CD4-positive, alpha-beta T cell (primary cell): ENCODE measurements at regions of chr1 and their contacts with region 1.

Region 1: DNA sequence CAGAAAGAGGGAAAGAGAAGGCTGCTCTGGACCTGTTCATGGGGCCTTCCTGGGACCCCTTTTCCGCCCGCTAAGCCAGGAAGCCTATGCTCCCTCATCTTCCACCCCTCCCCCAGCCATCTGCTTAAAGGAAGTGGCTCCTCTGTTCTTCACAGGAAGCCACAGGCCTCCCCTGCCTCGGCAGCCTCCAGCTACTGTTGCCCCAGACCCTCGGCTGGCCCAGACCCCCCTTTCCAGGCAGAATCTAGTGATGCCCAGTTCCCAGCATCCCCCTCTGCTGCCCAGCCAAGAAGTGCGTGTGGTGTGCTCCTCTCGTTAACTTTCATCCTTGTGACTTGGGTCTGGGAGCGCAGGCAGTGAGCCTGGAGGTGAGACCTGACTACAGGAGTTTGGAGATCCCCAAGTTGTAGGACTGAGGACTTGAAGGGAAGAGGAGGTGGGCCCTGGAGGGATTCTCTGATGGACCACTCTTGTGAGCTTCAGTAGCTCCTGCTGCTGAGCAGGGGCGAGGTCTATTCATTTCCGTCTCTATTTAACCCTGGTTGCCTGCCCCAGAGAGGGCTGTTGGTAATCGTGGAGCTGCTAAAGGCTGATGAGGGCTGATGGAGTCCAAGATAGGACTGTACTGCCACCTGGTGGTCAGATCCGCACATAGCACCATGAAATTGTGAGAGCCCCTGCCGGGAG is 9.1 kb downstream of the IFI6 start:
- DNase-seq: peak; percentile 81 to 95 (median 90)
- ATAC-seq: peak; percentile 75
- H3K4me3 ChIP-seq: peak overlapping the region; percentile 44
- H3K4me3 Mint-ChIP-seq: peak overlapping the region; percentile 68
- H3K27ac ChIP-seq: peak overlapping the region; percentile 91 to 92
- H3K27ac Mint-ChIP-seq: peak overlapping the region; percentile 88
- H3K4me1 ChIP-seq: peaks cover 49% of the 10 kb centered on the region
- H3K4me1 Mint-ChIP-seq: peaks cover 48% of the 10 kb centered on the region
- H3K27me3 ChIP-seq: no peaks in the 10 kb centered on the region
- H3K27me3 Mint-ChIP-seq: no peaks in the 10 kb centered on the region
- CTCF ChIP-seq: peak; percentile 80

Region 2: DNA sequence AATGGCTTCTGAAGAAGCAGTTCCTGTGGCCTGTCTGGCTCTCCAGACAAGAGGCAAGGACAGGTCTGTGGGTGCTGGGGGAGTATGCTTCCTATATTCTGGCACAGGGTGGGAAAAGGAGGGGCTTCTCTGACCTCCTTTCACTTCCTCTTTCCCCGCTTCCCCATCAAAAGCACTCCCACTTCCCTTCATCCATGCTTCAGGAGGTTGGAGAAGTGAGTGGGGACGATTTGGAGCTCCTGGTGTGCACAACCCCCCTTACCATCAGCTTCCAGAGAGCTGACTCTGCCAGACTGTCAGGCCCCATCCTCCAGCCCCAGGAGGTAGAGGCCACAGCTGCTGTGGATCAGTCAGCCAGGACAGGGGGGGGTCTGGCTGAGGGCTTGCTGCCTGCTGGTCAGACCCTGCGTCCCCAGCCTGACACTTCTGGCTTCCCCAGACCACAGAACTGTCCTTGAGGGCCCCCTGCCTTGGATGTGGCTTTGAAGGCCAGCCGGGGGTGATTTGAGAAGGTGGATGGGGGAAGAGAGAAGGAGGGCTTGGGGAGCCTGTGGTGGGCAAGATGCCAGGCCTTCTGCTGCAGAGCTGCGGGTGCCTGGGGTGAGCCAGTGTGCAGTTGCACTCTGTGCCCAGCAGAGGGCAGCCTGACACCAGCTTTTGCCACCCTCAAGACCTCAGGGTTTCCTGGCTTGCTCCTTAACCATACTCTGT is 362.4 kb before region 1 on chr1:
- CTCF ChIA-PET with region 1: interaction called, 4 read pairs
- POLR2A ChIA-PET with region 1: no interaction called
- intact Hi-C with region 1: loop called (anchors 5 kb)
- DNase-seq: peak; percentile 61 to 91 (median 74)
- ATAC-seq: peak; percentile 96
- H3K4me3 ChIP-seq: no peak overlapping the region
- H3K4me3 Mint-ChIP-seq: no peak overlapping the region
- H3K27ac ChIP-seq: no peak overlapping the region
- H3K27ac Mint-ChIP-seq: no peak overlapping the region
- H3K4me1 ChIP-seq: peaks cover 8% of the 10 kb centered on the region
- H3K4me1 Mint-ChIP-seq: peaks cover 5% of the 10 kb centered on the region
- H3K27me3 ChIP-seq: no peaks in the 10 kb centered on the region
- H3K27me3 Mint-ChIP-seq: no peaks in the 10 kb centered on the region
- CTCF ChIP-seq: peak; percentile 96

Region 3: GRCh38 chr1:27416387-27417111 is 246.3 kb before region 1 on chr1:
- CTCF ChIA-PET with region 1: interaction called, 5 read pairs
- POLR2A ChIA-PET with region 1: interaction called, 4 read pairs
- intact Hi-C with region 1: loop called (anchors 5 kb)
- DNase-seq: peak in 10 of 14 experiments; percentile 28 to 81 (median 49)
- ATAC-seq: peak; percentile 73
- H3K4me3 ChIP-seq: no peak overlapping the region
- H3K4me3 Mint-ChIP-seq: no peak overlapping the region
- H3K27ac ChIP-seq: no peak overlapping the region
- H3K27ac Mint-ChIP-seq: peak overlapping the region; percentile 54
- H3K4me1 ChIP-seq: peaks cover 18% of the 10 kb centered on the region
- H3K4me1 Mint-ChIP-seq: peaks cover 46% of the 10 kb centered on the region
- H3K27me3 ChIP-seq: no peaks in the 10 kb centered on the region
- H3K27me3 Mint-ChIP-seq: no peaks in the 10 kb centered on the region
- CTCF ChIP-seq: peak; percentile 60

Region 4: GRCh38 chr1:27473755-27474154 is 189.1 kb before region 1 on chr1:
- CTCF ChIA-PET with region 1: no interaction called
- POLR2A ChIA-PET with region 1: no interaction called
- intact Hi-C with region 1: no loop called
- DNase-seq: peak in 2 of 14 experiments; percentile 3 to 18
- ATAC-seq: peak; percentile 32
- H3K4me3 ChIP-seq: no peak overlapping the region
- H3K4me3 Mint-ChIP-seq: peak overlapping the region; percentile 16
- H3K27ac ChIP-seq: no peak overlapping the region
- H3K27ac Mint-ChIP-seq: peak overlapping the region; percentile 57
- H3K4me1 ChIP-seq: peaks cover 59% of the 10 kb centered on the region
- H3K4me1 Mint-ChIP-seq: peaks cover 73% of the 10 kb centered on the region
- H3K27me3 ChIP-seq: no peaks in the 10 kb centered on the region
- H3K27me3 Mint-ChIP-seq: no peaks in the 10 kb centered on the region
- CTCF ChIP-seq: no peak

Region 5: DNA sequence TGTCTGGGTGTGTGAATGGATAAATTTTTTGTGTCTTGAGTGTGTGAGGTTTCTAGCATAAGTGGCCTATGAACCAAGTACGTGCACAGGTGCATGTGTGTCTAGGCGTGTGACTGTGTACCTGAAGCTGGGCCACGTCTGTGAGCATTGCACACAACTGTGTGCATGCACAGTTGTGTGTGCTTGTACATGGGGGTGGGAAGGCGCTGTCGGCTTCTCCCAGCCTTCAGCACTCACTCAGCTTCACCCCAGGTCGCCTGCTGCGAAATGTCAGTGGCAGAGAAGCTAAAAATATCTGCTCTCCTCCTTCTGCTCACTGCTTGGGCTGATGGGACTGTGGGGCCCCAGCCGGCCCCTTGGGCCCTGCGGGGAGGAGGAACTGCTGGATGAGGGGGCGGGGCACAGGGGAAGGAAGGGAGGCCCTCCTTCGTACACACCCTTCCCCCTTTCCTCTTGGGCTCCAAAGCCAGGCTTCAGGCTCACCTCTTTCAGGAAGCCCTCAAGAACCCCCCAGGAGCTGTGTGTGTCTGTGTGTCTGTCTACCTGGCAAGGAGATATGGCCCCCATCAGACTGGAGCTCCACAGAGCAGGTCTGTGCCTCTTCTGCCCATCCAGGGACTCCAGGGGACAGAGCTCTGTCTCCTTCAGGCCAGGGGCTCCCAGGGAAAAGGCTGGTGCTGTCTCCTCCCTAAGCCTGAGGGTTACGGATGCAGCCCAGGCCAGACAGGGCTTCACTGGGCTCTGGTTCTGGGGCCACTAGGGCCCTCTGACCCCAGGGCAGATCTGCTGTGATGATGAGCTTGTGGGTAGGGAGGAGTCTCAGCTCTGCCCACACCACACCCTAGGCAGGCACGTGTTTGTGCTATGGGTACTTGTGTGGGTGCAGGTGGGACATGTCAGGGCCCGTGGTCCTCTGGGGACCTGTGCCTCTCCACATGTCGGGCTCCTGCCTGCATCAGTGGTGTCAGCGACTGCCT is 137.3 kb before region 1 on chr1:
- CTCF ChIA-PET with region 1: interaction called, 3 read pairs
- POLR2A ChIA-PET with region 1: interaction called, 9 read pairs
- intact Hi-C with region 1: loop called (anchors 5 to 10 kb)
- DNase-seq: peak in 12 of 14 experiments; percentile 18 to 73 (median 53)
- ATAC-seq: peak; percentile 7
- H3K4me3 ChIP-seq: peak overlapping the region; percentile 45
- H3K4me3 Mint-ChIP-seq: peak overlapping the region; percentile 68
- H3K27ac ChIP-seq: peak overlapping the region; percentile 30 to 75
- H3K27ac Mint-ChIP-seq: peak overlapping the region; percentile 96
- H3K4me1 ChIP-seq: peaks cover 82% of the 10 kb centered on the region
- H3K4me1 Mint-ChIP-seq: peaks cover 85% of the 10 kb centered on the region
- H3K27me3 ChIP-seq: no peaks in the 10 kb centered on the region
- H3K27me3 Mint-ChIP-seq: no peaks in the 10 kb centered on the region
- CTCF ChIP-seq: no peak

Region 6: DNA sequence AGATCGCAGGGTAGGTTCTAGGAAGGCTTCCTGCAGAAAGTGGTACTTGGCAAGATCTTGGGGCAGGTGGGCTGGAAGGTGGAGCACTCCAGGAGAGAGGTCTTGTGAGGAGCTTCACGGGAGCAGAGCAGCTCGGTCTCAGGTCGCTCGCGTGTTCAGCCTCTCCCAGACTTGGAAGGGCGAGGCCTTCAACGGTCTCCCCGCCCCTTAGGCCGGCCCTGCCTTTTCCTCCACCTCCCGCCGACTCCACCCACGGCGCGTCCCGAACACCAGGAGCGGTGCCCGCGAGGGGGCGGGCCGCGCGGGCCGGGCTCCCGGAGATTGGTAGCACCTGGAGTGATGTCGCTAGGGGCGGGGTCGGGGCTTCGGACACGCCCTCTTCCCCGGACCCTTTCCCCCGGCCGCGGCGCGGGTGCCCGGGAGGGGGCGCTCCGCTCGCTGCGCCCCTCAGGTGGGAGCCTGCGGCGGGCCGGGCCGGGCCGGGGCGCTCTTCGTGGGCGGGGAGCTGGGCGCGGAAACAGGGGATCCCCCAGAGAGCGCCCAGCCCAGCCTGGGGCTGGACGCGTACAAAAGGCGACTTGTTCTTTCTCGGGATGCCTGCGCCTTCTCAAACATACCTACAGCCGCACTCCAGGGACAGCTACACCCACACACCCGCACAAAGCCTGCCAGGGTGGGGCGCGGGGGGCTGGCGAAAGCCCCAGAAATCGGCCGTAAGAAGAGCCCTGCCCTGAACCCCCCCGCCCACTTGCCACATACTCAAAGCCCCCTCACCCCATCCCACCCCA is 94.4 kb before region 1 on chr1:
- CTCF ChIA-PET with region 1: interaction called, 25 read pairs
- POLR2A ChIA-PET with region 1: interaction called, 9 read pairs
- intact Hi-C with region 1: loop called in 1 of 2 experiments (anchors 2 kb)
- DNase-seq: peak; percentile 84 to 98 (median 92)
- ATAC-seq: peak; percentile 91
- H3K4me3 ChIP-seq: peak overlapping the region; percentile 46
- H3K4me3 Mint-ChIP-seq: peak overlapping the region; percentile 67
- H3K27ac ChIP-seq: peak overlapping the region; percentile 49 to 62
- H3K27ac Mint-ChIP-seq: peak overlapping the region; percentile 74
- H3K4me1 ChIP-seq: peaks cover 31% of the 10 kb centered on the region
- H3K4me1 Mint-ChIP-seq: peaks cover 60% of the 10 kb centered on the region
- H3K27me3 ChIP-seq: no peaks in the 10 kb centered on the region
- H3K27me3 Mint-ChIP-seq: no peaks in the 10 kb centered on the region
- CTCF ChIP-seq: peak; percentile 68

Region 7: GRCh38 chr1:27609210-27609555 is 53.7 kb before region 1 on chr1:
- CTCF ChIA-PET with region 1: interaction called, 55 read pairs
- POLR2A ChIA-PET with region 1: interaction called, 98 read pairs
- intact Hi-C with region 1: loop called (anchors 1 kb)
- DNase-seq: peak in 2 of 14 experiments; percentile 57 to 68
- ATAC-seq: no peak
- H3K4me3 ChIP-seq: no peak overlapping the region
- H3K4me3 Mint-ChIP-seq: no peak overlapping the region
- H3K27ac ChIP-seq: peak overlapping the region; percentile 18 to 28
- H3K27ac Mint-ChIP-seq: no peak overlapping the region
- H3K4me1 ChIP-seq: peaks cover 77% of the 10 kb centered on the region
- H3K4me1 Mint-ChIP-seq: peaks cover 39% of the 10 kb centered on the region
- H3K27me3 ChIP-seq: no peaks in the 10 kb centered on the region
- H3K27me3 Mint-ChIP-seq: no peaks in the 10 kb centered on the region
- CTCF ChIP-seq: no peak

Region 8: GRCh38 chr1:27643701-27644625 is 18.9 kb before region 1 on chr1:
- CTCF ChIA-PET with region 1: interaction called, 38 read pairs
- POLR2A ChIA-PET with region 1: interaction called, 21 read pairs
- intact Hi-C with region 1: loop called (anchors 1 kb)
- DNase-seq: peak; percentile 55 to 87 (median 68)
- ATAC-seq: peak; percentile 99
- H3K4me3 ChIP-seq: no peak overlapping the region
- H3K4me3 Mint-ChIP-seq: no peak overlapping the region
- H3K27ac ChIP-seq: no peak overlapping the region
- H3K27ac Mint-ChIP-seq: peak overlapping the region; percentile 7
- H3K4me1 ChIP-seq: peaks cover 22% of the 10 kb centered on the region
- H3K4me1 Mint-ChIP-seq: peaks cover 14% of the 10 kb centered on the region
- H3K27me3 ChIP-seq: no peaks in the 10 kb centered on the region
- H3K27me3 Mint-ChIP-seq: no peaks in the 10 kb centered on the region
- CTCF ChIP-seq: peak; percentile 83

Region 9: GRCh38 chr1:27704958-27705357 is 42.1 kb after region 1 on chr1:
- CTCF ChIA-PET with region 1: no interaction called
- POLR2A ChIA-PET with region 1: no interaction called
- intact Hi-C with region 1: no loop called
- DNase-seq: no peak
- ATAC-seq: no peak
- H3K4me3 ChIP-seq: no peak overlapping the region
- H3K4me3 Mint-ChIP-seq: no peak overlapping the region
- H3K27ac ChIP-seq: no peak overlapping the region
- H3K27ac Mint-ChIP-seq: no peak overlapping the region
- H3K4me1 ChIP-seq: no peaks in the 10 kb centered on the region
- H3K4me1 Mint-ChIP-seq: no peaks in the 10 kb centered on the region
- H3K27me3 ChIP-seq: peaks cover 0 to 5% of the 10 kb centered on the region in 2 experiments
- H3K27me3 Mint-ChIP-seq: peaks cover 19% of the 10 kb centered on the region
- CTCF ChIP-seq: no peak

Region 10: DNA sequence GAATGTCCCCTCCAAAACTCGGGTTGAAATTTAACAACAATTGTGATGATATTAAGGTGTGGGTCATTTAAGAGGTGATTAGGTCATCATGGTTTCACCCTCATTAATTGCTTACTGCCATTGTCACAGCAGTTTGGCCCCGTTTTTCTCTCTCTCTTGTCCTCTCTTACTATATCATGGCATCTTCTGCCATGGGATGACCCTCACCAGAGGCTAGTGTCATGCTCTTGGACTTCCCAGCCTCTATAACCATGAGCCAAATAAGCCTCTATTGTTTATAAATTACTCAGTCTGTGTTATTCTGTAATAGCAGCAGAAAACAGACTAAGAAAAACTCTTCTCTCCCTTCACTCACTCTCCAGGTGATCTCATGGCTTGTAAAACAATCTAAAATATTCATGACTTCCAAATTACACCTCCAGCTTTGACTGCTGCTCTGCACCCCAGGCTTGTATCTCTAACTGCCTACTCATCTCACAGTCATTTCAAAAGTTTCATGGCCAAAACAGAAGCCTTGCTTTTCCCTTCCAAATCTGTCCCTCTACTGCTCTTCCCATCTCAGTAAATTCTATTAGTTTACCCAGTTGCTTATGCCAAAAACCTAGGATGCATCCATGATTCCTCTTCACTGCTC is 53.5 kb after region 1 on chr1:
- CTCF ChIA-PET with region 1: no interaction called
- POLR2A ChIA-PET with region 1: no interaction called
- intact Hi-C with region 1: no loop called
- DNase-seq: no peak
- ATAC-seq: no peak
- H3K4me3 ChIP-seq: no peak overlapping the region
- H3K4me3 Mint-ChIP-seq: no peak overlapping the region
- H3K27ac ChIP-seq: no peak overlapping the region
- H3K27ac Mint-ChIP-seq: no peak overlapping the region
- H3K4me1 ChIP-seq: no peaks in the 10 kb centered on the region
- H3K4me1 Mint-ChIP-seq: no peaks in the 10 kb centered on the region
- H3K27me3 ChIP-seq: peaks cover 0 to 3% of the 10 kb centered on the region in 2 experiments
- H3K27me3 Mint-ChIP-seq: peaks cover 21% of the 10 kb centered on the region
- CTCF ChIP-seq: no peak

Region 11: GRCh38 chr1:28172713-28173150 is 509.9 kb after region 1 on chr1:
- CTCF ChIA-PET with region 1: no interaction called
- POLR2A ChIA-PET with region 1: no interaction called
- intact Hi-C with region 1: no loop called
- DNase-seq: peak in 4 of 14 experiments; percentile 13 to 61 (median 54)
- ATAC-seq: peak; percentile 13
- H3K4me3 ChIP-seq: no peak overlapping the region
- H3K4me3 Mint-ChIP-seq: peak overlapping the region; percentile 42
- H3K27ac ChIP-seq: no peak overlapping the region
- H3K27ac Mint-ChIP-seq: peak overlapping the region; percentile 7
- H3K4me1 ChIP-seq: peaks cover 46% of the 10 kb centered on the region
- H3K4me1 Mint-ChIP-seq: peaks cover 41% of the 10 kb centered on the region
- H3K27me3 ChIP-seq: no peaks in the 10 kb centered on the region
- H3K27me3 Mint-ChIP-seq: no peaks in the 10 kb centered on the region
- CTCF ChIP-seq: no peak